ENCODE measurements at regions of chr9 and their contacts with region 1.

Region 1: DNA sequence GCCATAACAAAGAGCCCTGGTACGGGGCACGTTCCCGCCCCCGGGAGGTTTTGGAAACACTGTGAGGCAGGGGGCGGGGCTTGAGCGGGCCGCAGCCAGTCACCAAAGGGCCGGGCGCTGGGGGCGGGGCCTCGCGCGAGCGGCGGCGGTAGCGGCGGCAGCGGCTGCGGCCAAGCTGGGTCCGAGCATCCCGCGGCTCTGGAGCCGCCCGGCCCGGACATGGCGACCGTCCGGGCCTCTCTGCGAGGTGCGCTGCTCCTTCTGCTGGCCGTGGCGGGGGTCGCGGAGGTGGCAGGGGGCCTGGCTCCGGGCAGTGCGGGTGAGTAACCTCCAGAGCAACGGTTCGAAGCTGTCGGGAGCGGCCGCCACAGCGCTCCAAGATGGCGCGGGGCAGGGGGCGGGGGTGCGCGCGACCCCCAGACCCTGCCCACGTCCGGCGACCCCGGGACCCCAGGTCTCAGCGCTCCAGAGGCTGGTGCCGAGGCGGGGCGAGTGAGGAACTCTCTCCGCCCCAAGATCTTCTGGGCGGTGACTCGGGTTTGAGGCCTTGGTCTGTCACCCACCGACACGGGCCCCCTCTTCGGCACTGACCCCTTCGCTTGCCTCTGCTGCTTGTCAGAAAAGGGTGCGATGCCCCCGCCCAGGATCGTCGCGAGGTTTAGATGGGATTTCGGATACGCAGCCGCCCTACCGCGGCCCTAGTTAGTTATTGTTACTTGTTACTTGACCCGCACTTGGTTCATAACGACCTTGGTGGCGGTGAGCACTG is at the start of gene RECK:
- DNase-seq: peak; percentile 95
- ATAC-seq: peak; percentile 96
- H3K4me3 Mint-ChIP-seq: peak within 1 kb of the TSS; percentile 83
- H3K27ac Mint-ChIP-seq: peak within 1 kb of the TSS; percentile 85
- H3K4me1 Mint-ChIP-seq: peaks cover 41% of the 10 kb centered on the region
- H3K27me3 Mint-ChIP-seq: no peaks in the 10 kb centered on the region
- total RNA-seq, gene RECK: 5.0 to 5.6 TPM

Region 2: DNA sequence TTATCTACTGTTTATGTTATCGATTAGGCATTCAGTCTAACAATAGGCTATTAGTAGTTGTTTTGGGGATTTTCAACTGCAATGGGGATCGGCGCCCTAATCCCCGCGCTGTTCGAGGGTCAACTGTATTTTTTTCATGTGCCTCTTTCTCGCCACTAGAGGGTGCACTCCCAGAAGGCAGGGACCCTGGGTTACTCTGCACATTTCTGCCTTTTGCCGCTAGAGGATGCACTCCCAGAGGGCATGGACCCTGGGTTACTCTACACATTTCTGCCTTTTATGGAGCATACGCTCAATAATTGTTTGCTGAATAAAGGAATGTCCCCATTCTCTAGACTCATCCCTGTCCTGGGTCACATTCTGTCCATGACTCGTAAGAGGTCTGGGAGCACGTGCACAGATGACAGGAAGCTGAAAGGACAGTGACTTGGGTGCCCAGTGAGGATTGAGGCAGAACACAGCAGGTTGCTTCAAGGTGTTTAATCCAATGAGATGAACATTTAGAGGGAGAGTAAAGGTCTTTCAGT is 28.1 kb before region 1 on chr9:
- CTCF ChIA-PET with region 1: interaction called, 9 read pairs
- POLR2A ChIA-PET with region 1: no interaction called
- intact Hi-C with region 1: loop called in 1 of 2 experiments (anchors 1 kb)
- DNase-seq: peak; percentile 77
- ATAC-seq: peak; percentile 87
- H3K4me3 Mint-ChIP-seq: no peak overlapping the region
- H3K27ac Mint-ChIP-seq: no peak overlapping the region
- H3K4me1 Mint-ChIP-seq: peaks cover 23% of the 10 kb centered on the region
- H3K27me3 Mint-ChIP-seq: peaks cover 24% of the 10 kb centered on the region

Region 3: DNA sequence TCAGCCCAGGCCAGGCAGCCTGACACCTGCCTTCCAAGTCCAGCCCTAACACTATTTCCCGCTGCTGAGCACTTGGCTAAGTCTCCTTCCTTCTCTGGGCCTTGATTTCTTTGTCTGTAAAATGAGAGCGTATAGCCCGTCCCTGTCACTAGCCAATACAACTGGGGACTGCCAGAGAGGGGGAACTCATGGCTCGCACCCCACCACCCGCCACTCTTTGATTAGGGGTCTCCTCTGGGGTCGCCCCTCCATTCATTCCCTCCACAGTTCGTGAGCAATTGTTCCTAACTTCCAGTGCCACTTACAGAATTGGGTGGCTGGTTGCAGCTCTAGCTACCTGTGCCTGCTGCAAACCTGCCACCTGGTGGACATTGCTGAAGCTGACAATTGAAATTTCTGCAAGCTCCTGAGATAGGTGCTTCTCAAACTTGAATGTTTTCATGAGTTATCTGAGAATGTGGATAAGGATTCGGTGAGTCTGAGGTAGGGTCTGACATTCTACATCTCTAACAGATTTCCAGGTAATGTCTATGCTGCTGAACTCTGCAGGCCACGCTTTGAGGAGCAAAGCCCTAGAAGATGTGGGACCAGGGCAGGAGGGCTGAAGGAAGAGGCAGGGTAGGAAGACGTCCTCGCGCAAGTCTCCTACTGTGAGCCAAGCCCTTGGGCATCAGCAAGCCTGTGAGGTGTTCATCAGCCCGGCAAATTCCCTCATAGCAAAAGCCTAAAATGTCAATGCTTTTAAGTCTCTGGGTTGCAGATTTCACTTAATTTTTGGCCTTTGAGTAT is 13.5 kb before region 1 on chr9:
- CTCF ChIA-PET with region 1: interaction called, 42 read pairs
- POLR2A ChIA-PET with region 1: no interaction called
- intact Hi-C with region 1: no loop called
- DNase-seq: peak; percentile 83
- ATAC-seq: peak; percentile 90
- H3K4me3 Mint-ChIP-seq: no peak overlapping the region
- H3K27ac Mint-ChIP-seq: no peak overlapping the region
- H3K4me1 Mint-ChIP-seq: no peaks in the 10 kb centered on the region
- H3K27me3 Mint-ChIP-seq: no peaks in the 10 kb centered on the region

Region 4: GRCh38 chr9:36092509-36093215 is 55.7 kb after region 1 on chr9:
- CTCF ChIA-PET with region 1: no interaction called
- POLR2A ChIA-PET with region 1: no interaction called
- intact Hi-C with region 1: no loop called
- DNase-seq: peak; percentile 60
- ATAC-seq: peak; percentile 99
- H3K4me3 Mint-ChIP-seq: no peak overlapping the region
- H3K27ac Mint-ChIP-seq: peak overlapping the region; percentile 39
- H3K4me1 Mint-ChIP-seq: peaks cover 18% of the 10 kb centered on the region
- H3K27me3 Mint-ChIP-seq: no peaks in the 10 kb centered on the region

Region 5: GRCh38 chr9:36136272-36136893 is 99.4 kb after region 1 on chr9 and contains the start of gene GLIPR2:
- CTCF ChIA-PET with region 1: no interaction called
- POLR2A ChIA-PET with region 1: no interaction called
- intact Hi-C with region 1: loop called in 1 of 2 experiments (anchors 1 kb)
- DNase-seq: peak; percentile 88
- ATAC-seq: peak; percentile 96
- H3K4me3 Mint-ChIP-seq: peak within 1 kb of the TSS; percentile 81
- H3K27ac Mint-ChIP-seq: peak within 1 kb of the TSS; percentile 48
- H3K4me1 Mint-ChIP-seq: peaks cover 45% of the 10 kb centered on the region
- H3K27me3 Mint-ChIP-seq: no peaks in the 10 kb centered on the region
- total RNA-seq, gene GLIPR2: 13.7 to 18.4 TPM

Region 6: GRCh38 chr9:36166101-36166927 is 129.3 kb after region 1 on chr9:
- CTCF ChIA-PET with region 1: interaction called, 4 read pairs
- POLR2A ChIA-PET with region 1: no interaction called
- intact Hi-C with region 1: loop called (anchors 1 to 5 kb)
- DNase-seq: peak; percentile 90
- ATAC-seq: peak; percentile 97
- H3K4me3 Mint-ChIP-seq: peak overlapping the region; percentile 69
- H3K27ac Mint-ChIP-seq: peak overlapping the region; percentile 31
- H3K4me1 Mint-ChIP-seq: peaks cover 6% of the 10 kb centered on the region
- H3K27me3 Mint-ChIP-seq: no peaks in the 10 kb centered on the region

Region 7: DNA sequence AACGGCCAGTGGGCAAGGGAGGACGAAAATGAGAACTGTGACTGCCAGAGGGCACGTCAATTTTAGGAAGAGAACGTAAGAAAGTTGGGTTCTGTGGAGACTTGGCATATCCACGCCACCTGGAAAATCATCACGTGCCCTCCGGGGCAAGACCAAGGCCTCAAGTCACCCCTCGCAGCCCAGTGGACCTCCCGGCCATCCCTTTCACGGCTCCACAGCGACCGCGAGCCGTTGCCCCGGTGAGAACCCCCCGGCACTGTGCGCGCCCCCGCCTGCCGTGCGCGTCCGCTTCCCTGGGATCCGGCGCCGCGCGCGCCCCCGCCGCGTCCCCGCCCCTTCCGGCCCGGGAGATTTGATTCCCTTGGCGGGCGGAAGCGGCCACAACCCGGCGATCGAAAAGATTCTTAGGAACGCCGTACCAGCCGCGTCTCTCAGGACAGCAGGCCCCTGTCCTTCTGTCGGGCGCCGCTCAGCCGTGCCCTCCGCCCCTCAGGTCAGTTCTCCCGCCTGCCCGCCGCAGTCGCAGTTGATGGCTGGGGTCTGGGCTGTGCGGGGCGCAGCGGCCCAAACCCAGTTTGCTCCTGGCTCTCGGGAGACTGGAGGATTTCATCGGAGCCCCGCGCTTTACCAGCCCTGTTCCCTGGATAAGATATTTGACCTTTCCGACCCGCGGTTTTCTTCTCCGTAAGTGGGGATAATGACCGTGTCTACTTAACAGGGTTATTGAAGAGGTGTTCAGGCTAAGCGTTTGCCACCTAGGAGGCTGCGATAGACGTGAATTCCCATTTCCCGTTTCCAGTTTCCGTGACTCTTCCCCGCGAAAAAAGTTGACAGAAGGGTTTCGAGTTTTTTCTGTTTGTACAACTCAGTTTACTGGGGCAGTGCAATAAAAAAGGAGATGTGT is 535.8 kb after region 1 on chr9 and contains the start of gene MELK:
- CTCF ChIA-PET with region 1: no interaction called
- POLR2A ChIA-PET with region 1: no interaction called
- intact Hi-C with region 1: loop called in 1 of 2 experiments (anchors 2 kb)
- DNase-seq: peak; percentile 89
- ATAC-seq: peak; percentile 73
- H3K4me3 Mint-ChIP-seq: peak within 1 kb of the TSS; percentile 97
- H3K27ac Mint-ChIP-seq: peak within 1 kb of the TSS; percentile 85
- H3K4me1 Mint-ChIP-seq: peaks cover 27% of the 10 kb centered on the region
- H3K27me3 Mint-ChIP-seq: no peaks in the 10 kb centered on the region
- total RNA-seq, gene MELK: 63.9 to 66.1 TPM

Measured in activated CD4-positive, alpha-beta T cell treated with anti-CD3 and anti-CD28 coated beads for 36 hours (primary cell).